Body of pancreas (tissue), 4 donors: ENCODE measurements at regions of chr17 and their contacts with region 1.

Region 1: DNA sequence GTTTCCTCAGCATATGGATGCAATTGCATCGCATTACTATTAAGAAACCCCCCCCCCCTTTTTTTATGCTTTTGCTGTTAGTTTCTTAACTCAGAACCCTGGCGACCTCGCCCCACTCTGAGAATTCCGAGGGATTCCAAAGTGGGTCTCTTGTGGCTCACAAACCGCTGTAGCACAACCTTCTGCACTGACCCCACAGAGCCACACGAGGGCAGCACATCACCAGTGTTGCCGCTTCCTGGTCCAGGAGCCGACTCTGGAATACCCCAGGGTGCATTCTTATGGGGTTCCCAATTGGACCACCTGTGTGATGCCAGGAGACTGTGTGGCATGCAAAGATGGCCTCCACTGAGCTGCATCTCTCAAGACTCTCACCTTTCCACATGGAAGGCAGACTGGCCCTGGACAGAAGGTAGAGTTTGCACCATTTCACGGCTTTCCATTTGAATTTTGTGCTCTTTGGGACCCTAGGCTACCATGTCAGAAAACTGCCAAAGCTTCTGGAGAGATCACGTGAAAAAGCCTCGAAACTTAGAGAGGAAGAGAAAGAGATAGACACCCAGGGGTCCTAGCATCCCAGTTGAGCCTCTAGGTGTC is 432.7 kb upstream of the ASIC2 start:
- DNase-seq: peak; percentile 42 to 58 (median 45)
- ATAC-seq: no peak
- H3K4me3 ChIP-seq: no peak overlapping the region
- H3K27ac ChIP-seq: no peak overlapping the region
- H3K4me1 ChIP-seq: no peaks in the 10 kb centered on the region
- H3K27me3 ChIP-seq: peaks cover 0 to 5% of the 10 kb centered on the region in 2 donors
- CTCF ChIP-seq: peak; percentile 51 to 59 (median 56)
- POLR2A ChIP-seq: no peak

Region 2: GRCh38 chr17:33786478-33786877 is 60.7 kb after region 1 on chr17:
- intact Hi-C with region 1: loop called (anchors 10 kb)
- DNase-seq: no peak
- ATAC-seq: no peak
- H3K4me3 ChIP-seq: no peak overlapping the region
- H3K27ac ChIP-seq: no peak overlapping the region
- H3K4me1 ChIP-seq: no peaks in the 10 kb centered on the region
- H3K27me3 ChIP-seq: no peaks in the 10 kb centered on the region
- CTCF ChIP-seq: no peak
- POLR2A ChIP-seq: no peak

Region 3: GRCh38 chr17:33905338-33905800 is 179.6 kb after region 1 on chr17:
- intact Hi-C with region 1: no loop called
- DNase-seq: no peak
- ATAC-seq: no peak
- H3K4me3 ChIP-seq: no peak overlapping the region
- H3K27ac ChIP-seq: no peak overlapping the region
- H3K4me1 ChIP-seq: no peaks in the 10 kb centered on the region
- H3K27me3 ChIP-seq: no peaks in the 10 kb centered on the region
- CTCF ChIP-seq: no peak
- POLR2A ChIP-seq: no peak